ENCODE measurements at regions of chr4 and their contacts with region 1.

Region 1: DNA sequence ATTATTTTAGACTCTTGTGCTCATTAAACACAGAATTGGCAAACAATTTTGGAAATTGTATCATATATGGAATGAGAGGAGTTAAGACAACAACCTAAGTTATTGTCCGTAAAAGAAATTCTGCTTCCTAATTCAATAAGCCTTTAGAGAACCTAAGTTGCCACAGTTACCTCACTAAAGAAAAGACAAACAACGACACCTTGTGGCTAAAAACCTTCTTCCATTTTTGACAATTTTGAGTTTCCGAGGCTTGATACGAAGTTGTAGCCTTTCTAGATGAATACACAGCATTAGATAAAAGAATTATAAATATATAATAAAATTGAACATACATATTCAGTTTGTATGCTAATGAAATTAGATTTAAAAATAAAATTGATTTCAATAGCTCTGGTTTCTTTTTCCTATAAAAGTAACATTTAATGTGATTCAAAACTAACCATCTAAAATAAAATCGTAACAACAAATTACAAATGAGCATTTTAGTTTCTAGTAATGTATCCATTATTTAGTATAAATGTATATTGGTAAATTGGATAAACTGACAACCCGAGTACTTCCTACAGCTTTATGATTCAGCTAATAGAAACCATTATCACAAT is 275.1 kb downstream of the GPM6A start:
- DNase-seq: peak in 1 of 2 experiments; percentile 42
- H3K4me3 ChIP-seq: no peak overlapping the region
- H3K4me3 Mint-ChIP-seq: no peak overlapping the region
- H3K27ac Mint-ChIP-seq: no peak overlapping the region
- H3K4me1 ChIP-seq: no peaks in the 10 kb centered on the region
- H3K4me1 Mint-ChIP-seq: no peaks in the 10 kb centered on the region
- H3K27me3 ChIP-seq: no peaks in the 10 kb centered on the region
- H3K27me3 Mint-ChIP-seq: no peaks in the 10 kb centered on the region
- CTCF ChIP-seq: peak; percentile 32 to 61

Region 2: GRCh38 chr4:174828845-174829701 is 707.9 kb before region 1 on chr4 and contains the start of gene GLRA3:
- CTCF ChIA-PET with region 1: no interaction called
- POLR2A ChIA-PET with region 1: no interaction called
- intact Hi-C with region 1: loop called (anchors 5 kb)
- DNase-seq: peak; percentile 57 to 60
- H3K4me3 ChIP-seq: no peak within 1 kb of the TSS
- H3K4me3 Mint-ChIP-seq: peak within 1 kb of the TSS; percentile 52
- H3K27ac Mint-ChIP-seq: no peak within 1 kb of the TSS
- H3K4me1 ChIP-seq: no peaks in the 10 kb centered on the region
- H3K4me1 Mint-ChIP-seq: no peaks in the 10 kb centered on the region
- H3K27me3 ChIP-seq: no peaks in the 10 kb centered on the region
- H3K27me3 Mint-ChIP-seq: no peaks in the 10 kb centered on the region
- CTCF ChIP-seq: no peak
- total RNA-seq, gene GLRA3: not detected in 2 replicates

Region 3: DNA sequence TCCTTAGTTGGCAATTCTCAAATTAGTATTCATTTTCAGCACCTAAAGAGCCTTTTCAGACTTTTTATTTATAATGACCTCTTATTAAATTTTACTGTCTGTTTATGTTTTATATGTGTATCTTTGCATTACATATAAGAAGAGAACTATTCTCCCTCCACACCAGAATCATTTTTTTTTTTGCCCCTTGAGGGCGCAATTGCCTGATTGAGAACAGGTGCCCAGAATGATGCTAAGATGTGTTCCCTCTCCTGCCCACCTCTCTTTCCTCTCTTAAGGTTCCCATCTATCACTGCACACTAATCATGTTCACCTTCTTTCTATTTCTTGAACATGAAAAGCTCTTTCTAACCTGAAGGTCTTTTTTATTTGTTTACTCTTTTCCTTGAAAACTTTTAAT is 663.0 kb before region 1 on chr4:
- CTCF ChIA-PET with region 1: no interaction called
- POLR2A ChIA-PET with region 1: no interaction called
- intact Hi-C with region 1: loop called (anchors 2 kb)
- DNase-seq: peak in 1 of 2 experiments; percentile 13
- H3K4me3 ChIP-seq: no peak overlapping the region
- H3K4me3 Mint-ChIP-seq: no peak overlapping the region
- H3K27ac Mint-ChIP-seq: no peak overlapping the region
- H3K4me1 ChIP-seq: peaks cover 21% of the 10 kb centered on the region
- H3K4me1 Mint-ChIP-seq: no peaks in the 10 kb centered on the region
- H3K27me3 ChIP-seq: no peaks in the 10 kb centered on the region
- H3K27me3 Mint-ChIP-seq: no peaks in the 10 kb centered on the region
- CTCF ChIP-seq: peak in 1 of 2 experiments; percentile 9

Region 4: DNA sequence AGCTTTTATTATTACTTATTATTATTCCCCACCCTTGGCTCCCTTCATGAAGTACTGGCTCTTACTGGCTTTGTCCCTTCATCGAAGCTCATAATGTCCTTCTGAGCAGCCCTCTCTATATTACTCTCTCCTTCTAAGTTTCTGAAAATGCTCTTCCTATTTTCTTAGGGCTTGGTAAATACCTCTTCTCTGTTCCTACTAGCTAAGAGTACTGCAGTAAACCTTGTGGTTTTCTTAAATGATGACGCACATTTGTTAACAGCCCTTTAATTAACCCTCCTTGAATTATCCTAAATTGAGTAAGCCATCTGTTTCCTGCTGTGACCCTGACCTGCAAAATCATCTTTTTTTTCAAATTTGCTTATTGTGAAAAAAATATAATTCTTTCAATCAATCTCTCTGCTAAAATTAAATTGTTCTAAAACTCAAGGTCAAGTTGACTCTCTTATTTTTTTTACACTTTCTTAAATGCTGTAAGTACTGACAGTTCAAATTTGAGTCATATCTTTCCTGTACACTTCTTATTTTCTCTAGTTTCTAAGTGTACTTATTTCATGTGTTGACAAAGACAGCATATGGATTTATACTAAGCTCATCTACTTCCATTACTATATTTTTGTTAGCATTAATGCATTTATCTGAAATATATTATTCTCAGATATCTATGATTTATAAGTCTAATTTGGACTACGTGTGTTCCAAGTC is 469.9 kb before region 1 on chr4:
- CTCF ChIA-PET with region 1: no interaction called
- POLR2A ChIA-PET with region 1: no interaction called
- intact Hi-C with region 1: loop called (anchors 5 kb)
- DNase-seq: no peak
- H3K4me3 ChIP-seq: no peak overlapping the region
- H3K4me3 Mint-ChIP-seq: no peak overlapping the region
- H3K27ac Mint-ChIP-seq: no peak overlapping the region
- H3K4me1 ChIP-seq: no peaks in the 10 kb centered on the region
- H3K4me1 Mint-ChIP-seq: no peaks in the 10 kb centered on the region
- H3K27me3 ChIP-seq: no peaks in the 10 kb centered on the region
- H3K27me3 Mint-ChIP-seq: no peaks in the 10 kb centered on the region
- CTCF ChIP-seq: no peak

Region 5: DNA sequence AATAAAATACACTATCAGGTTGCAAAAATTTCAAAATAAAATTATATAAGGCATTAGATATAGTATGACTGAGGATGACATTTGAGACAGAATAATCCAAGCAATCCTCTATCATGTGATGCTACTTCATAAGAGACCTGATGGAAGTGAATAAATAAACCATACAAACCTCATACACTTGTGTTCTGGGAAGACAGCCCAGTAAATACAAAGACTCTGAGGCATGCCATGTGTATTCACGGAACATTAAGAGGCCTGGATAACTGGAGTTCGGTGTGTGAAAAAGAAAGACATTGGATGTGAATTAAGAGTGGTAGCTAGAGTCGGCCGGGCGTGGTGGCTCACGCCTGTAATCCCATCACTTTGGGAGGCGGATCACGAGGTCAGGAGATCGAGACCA is 254.5 kb before region 1 on chr4:
- CTCF ChIA-PET with region 1: no interaction called
- POLR2A ChIA-PET with region 1: no interaction called
- intact Hi-C with region 1: loop called (anchors 10 kb)
- DNase-seq: no peak
- H3K4me3 ChIP-seq: no peak overlapping the region
- H3K4me3 Mint-ChIP-seq: no peak overlapping the region
- H3K27ac Mint-ChIP-seq: no peak overlapping the region
- H3K4me1 ChIP-seq: no peaks in the 10 kb centered on the region
- H3K4me1 Mint-ChIP-seq: no peaks in the 10 kb centered on the region
- H3K27me3 ChIP-seq: no peaks in the 10 kb centered on the region
- H3K27me3 Mint-ChIP-seq: peaks cover 3% of the 10 kb centered on the region
- CTCF ChIP-seq: no peak

Region 6: GRCh38 chr4:175509320-175509719 is 27.6 kb before region 1 on chr4:
- CTCF ChIA-PET with region 1: no interaction called
- POLR2A ChIA-PET with region 1: no interaction called
- intact Hi-C with region 1: loop called (anchors 1 kb)
- DNase-seq: peak in 1 of 2 experiments; percentile 20
- H3K4me3 ChIP-seq: no peak overlapping the region
- H3K4me3 Mint-ChIP-seq: no peak overlapping the region
- H3K27ac Mint-ChIP-seq: no peak overlapping the region
- H3K4me1 ChIP-seq: no peaks in the 10 kb centered on the region
- H3K4me1 Mint-ChIP-seq: no peaks in the 10 kb centered on the region
- H3K27me3 ChIP-seq: no peaks in the 10 kb centered on the region
- H3K27me3 Mint-ChIP-seq: no peaks in the 10 kb centered on the region
- CTCF ChIP-seq: peak in 1 of 2 experiments; percentile 46

Measured in Caco-2 (cell line).